Body of pancreas (tissue), 4 donors: ENCODE measurements at regions of chr11 and their contacts with region 1.

Region 1: GRCh38 chr11:17960091-17960490 is 52.8 kb downstream of the SERGEF start:
- DNase-seq: no peak
- ATAC-seq: no peak
- H3K4me3 ChIP-seq: no peak overlapping the region
- H3K27ac ChIP-seq: no peak overlapping the region
- H3K4me1 ChIP-seq: no peaks in the 10 kb centered on the region
- H3K27me3 ChIP-seq: no peaks in the 10 kb centered on the region
- CTCF ChIP-seq: no peak
- POLR2A ChIP-seq: no peak

Region 2: GRCh38 chr11:17601256-17601671 is 358.8 kb before region 1 on chr11:
- intact Hi-C with region 1: loop called (anchors 10 kb)
- DNase-seq: no peak
- ATAC-seq: no peak
- H3K4me3 ChIP-seq: no peak overlapping the region
- H3K27ac ChIP-seq: no peak overlapping the region
- H3K4me1 ChIP-seq: no peaks in the 10 kb centered on the region
- H3K27me3 ChIP-seq: no peaks in the 10 kb centered on the region
- CTCF ChIP-seq: no peak
- POLR2A ChIP-seq: no peak